ENCODE measurements at regions of chr5 and their contacts with region 1.

Region 1: GRCh38 chr5:18281682-18282557 is 647.7 kb downstream of the TAF11L14 start:
- DNase-seq: peak; percentile 77
- H3K4me3 ChIP-seq: no peak overlapping the region
- H3K27ac ChIP-seq: no peak overlapping the region
- H3K4me1 ChIP-seq: no peaks in the 10 kb centered on the region
- H3K27me3 ChIP-seq: no peaks in the 10 kb centered on the region
- CTCF ChIP-seq: peak; percentile 72

Region 2: DNA sequence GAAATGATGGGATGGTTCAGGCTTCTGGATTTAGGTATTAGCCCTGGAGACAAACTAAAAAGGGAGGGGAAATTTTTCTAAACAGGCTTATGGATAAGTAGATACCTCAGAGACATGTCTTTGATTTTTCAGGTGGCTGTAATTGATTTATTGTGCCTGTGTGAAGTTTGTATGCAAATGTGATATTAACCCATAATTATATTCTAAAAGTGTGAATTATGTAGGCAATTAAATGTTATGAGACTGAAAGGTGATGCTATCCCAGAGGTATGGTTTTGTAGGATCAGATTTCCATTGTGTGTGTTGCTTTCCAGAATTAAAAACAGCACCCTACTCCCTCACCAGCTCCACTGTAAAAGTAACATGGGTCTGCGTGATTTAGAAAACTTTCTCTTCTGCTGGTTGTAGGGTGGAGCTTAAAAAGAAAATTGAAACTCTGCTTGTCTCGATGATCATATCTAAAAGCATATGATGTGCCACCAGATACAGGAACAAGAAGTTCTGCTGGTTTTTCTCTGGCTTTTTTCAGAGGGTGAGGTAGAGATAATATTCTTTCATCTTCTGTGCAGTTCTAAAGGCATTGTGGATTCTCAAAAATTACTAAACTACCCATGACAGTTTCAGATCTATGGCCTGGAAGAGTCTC is 855.7 kb before region 1 on chr5:
- CTCF ChIA-PET with region 1: interaction called, 11 read pairs
- POLR2A ChIA-PET with region 1: no interaction called
- intact Hi-C with region 1: no loop called
- DNase-seq: no peak
- H3K4me3 ChIP-seq: no peak overlapping the region
- H3K27ac ChIP-seq: peak overlapping the region; percentile 17
- H3K4me1 ChIP-seq: peaks cover 42% of the 10 kb centered on the region
- H3K27me3 ChIP-seq: no peaks in the 10 kb centered on the region
- CTCF ChIP-seq: no peak

Region 3: DNA sequence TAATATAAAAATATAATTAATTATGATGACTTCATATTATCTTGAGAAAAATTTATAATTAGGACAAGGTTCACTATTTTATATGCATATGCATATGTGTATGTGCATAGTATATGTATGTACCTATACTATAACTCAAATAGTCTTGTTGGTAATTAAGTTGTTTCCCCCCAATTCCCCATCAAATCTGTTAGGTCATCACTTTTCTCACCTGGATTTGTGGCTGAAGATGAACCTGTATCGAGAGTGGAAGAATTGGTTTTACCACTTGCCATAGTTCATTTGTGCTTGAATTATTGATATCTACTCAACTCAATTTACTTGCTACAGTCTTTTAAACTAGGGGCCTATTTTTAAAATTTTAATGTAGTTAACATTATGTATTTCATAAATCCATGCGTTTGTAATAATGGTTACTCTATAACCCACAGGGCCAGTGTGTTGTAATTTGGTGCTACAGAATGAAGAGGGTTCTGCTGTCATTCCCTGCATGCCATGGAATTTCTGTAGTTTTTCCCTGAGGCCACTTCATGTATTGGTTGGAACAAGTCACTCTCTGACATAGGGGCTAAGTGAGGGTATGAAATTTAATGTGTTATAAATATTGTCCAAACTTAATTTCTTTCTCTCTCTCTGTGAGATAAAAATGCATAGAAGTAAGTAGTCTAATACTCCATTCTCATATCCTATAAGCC is 572.8 kb before region 1 on chr5:
- CTCF ChIA-PET with region 1: no interaction called
- POLR2A ChIA-PET with region 1: no interaction called
- intact Hi-C with region 1: loop called (anchors 10 kb)
- DNase-seq: no peak
- H3K4me3 ChIP-seq: no peak overlapping the region
- H3K27ac ChIP-seq: no peak overlapping the region
- H3K4me1 ChIP-seq: no peaks in the 10 kb centered on the region
- H3K27me3 ChIP-seq: no peaks in the 10 kb centered on the region
- CTCF ChIP-seq: no peak

Region 4: GRCh38 chr5:18113721-18114120 is 168.2 kb before region 1 on chr5:
- CTCF ChIA-PET with region 1: no interaction called
- POLR2A ChIA-PET with region 1: no interaction called
- intact Hi-C with region 1: loop called (anchors 10 kb)
- DNase-seq: peak; percentile 69
- H3K4me3 ChIP-seq: no peak overlapping the region
- H3K27ac ChIP-seq: no peak overlapping the region
- H3K4me1 ChIP-seq: peaks cover 21% of the 10 kb centered on the region
- H3K27me3 ChIP-seq: no peaks in the 10 kb centered on the region
- CTCF ChIP-seq: peak; percentile 59